ENCODE measurements at regions of chr6 and their contacts with region 1.

Region 1: DNA sequence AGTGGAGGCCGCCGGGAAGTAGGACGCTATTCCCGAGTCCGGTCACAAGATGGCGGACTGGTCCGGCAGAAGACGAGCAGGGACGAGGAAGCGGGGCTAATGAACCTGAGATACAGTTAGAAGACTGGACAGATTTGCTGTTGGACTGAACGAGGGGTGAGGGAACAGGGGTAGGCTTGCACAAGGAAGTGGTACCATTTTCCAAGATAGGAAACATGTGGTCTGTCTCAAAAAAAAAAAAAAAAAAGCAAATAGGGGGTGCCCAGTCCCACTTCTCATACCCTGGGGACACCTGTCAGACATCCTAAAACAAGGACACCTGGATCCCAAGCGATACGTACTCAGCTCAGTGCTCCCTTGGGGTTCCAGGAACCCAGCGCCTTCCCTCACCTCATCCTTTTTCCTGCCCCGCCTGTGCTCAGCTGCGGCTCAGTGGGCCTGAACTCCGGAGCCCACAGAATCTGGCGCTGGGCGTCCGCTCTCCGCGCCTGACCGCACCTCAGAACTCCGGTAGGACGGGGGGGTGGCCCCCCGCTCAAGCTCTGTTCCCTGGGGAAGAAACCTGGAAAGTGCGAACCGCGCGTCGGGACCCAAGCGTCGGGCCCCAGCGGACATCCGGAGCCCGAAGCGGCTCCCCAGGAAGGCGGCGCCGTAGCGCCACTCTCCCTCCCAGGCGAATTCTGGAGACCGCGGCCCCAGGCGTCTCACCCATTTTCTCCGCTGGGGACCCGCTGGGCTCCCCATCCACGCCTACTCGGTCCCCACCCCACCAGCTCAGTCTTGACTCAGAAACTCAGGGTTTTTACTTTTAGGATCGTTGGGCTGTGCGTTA is at the start of gene LY6G5C:
- DNase-seq: peak; percentile 77
- ATAC-seq: peak; percentile 39
- H3K4me3 Mint-ChIP-seq: peak within 1 kb of the TSS; percentile 89
- H3K27ac Mint-ChIP-seq: no peak within 1 kb of the TSS
- H3K4me1 Mint-ChIP-seq: peaks cover 16% of the 10 kb centered on the region
- H3K27me3 Mint-ChIP-seq: peaks cover 24% of the 10 kb centered on the region
- CTCF ChIP-seq: peak; percentile 6; the same call in 1 of the 2 replicates
- total RNA-seq, gene LY6G5C: 0.98 to 1.6 TPM (median 1.0 TPM) in 3 replicates

Region 2: DNA sequence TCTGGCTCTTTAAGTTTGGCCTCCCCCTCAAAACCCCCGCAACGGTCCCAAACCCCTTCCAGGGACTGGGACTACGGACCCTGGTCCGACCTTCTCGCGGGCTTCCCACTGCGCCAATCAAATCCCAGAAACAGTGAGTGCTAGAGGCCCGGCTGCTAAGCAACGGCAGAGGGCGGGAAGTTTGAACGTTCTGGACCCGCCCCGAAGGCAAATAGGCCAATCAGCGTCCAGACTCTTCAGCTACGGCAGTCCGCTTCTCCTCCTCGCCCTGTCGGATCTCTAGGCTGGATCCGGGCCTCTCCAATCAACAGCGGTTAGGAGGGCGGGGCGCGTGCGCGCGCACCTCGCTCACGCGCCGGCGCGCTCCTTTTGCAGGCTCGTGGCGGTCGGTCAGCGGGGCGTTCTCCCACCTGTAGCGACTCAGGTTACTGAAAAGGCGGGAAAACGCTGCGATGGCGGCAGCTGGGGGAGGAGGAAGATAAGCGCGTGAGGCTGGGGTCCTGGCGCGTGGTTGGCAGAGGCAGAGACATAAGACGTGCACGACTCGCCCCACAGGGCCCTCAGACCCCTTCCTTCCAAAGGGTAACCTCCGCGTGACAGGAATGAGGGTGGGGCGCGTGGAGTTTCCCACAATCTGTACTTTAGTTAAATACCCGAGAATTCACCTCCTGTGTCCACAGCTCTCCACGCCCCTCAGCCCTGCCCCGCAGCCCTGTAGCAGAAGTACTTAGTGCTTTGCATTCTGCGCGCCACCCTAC is 58.8 kb after region 1 on chr6 and contains the start of gene MSH5:
- CTCF ChIA-PET with region 1: interaction called, 16 read pairs
- POLR2A ChIA-PET with region 1: interaction called, 4 read pairs
- DNase-seq: peak; percentile 98
- ATAC-seq: peak; percentile 89
- H3K4me3 Mint-ChIP-seq: peak within 1 kb of the TSS; percentile 80
- H3K27ac Mint-ChIP-seq: peak within 1 kb of the TSS; percentile 85
- H3K4me1 Mint-ChIP-seq: peaks cover 42% of the 10 kb centered on the region
- H3K27me3 Mint-ChIP-seq: no peaks in the 10 kb centered on the region; the same call in 1 of the 2 replicates
- CTCF ChIP-seq: no peak
- total RNA-seq, gene MSH5: 43.1 to 62.3 TPM (median 56.1 TPM) in 3 replicates